HEK293 (cell line): ENCODE measurements at regions of chr17 and their contacts with region 1.

Region 1: GRCh38 chr17:64575431-64575830 is 68.7 kb downstream of the CEP95 start:
- H3K4me3 ChIP-seq: no peak overlapping the region
- H3K27ac ChIP-seq: no peak overlapping the region
- H3K4me1 ChIP-seq: no peaks in the 10 kb centered on the region
- CTCF ChIP-seq: no peak

Region 2: GRCh38 chr17:64535357-64535756 is 40.1 kb before region 1 on chr17:
- CTCF ChIA-PET with region 1: no interaction called
- POLR2A ChIA-PET with region 1: no interaction called
- H3K4me3 ChIP-seq: no peak overlapping the region
- H3K27ac ChIP-seq: no peak overlapping the region
- H3K4me1 ChIP-seq: no peaks in the 10 kb centered on the region
- CTCF ChIP-seq: no peak

Region 3: GRCh38 chr17:64653325-64653984 is 78.0 kb after region 1 on chr17:
- CTCF ChIA-PET with region 1: interaction called, 13 read pairs
- POLR2A ChIA-PET with region 1: no interaction called
- H3K4me3 ChIP-seq: no peak overlapping the region
- H3K27ac ChIP-seq: 0 out of 2 replicates have a peak overlapping the region, but pooled peaks have one; percentile 2
- H3K4me1 ChIP-seq: peaks cover 10% of the 10 kb centered on the region
- CTCF ChIP-seq: no peak